Activated CD4-positive, alpha-beta T cell treated with anti-CD3 and anti-CD28 coated beads for 36 hours (primary cell): ENCODE measurements at regions of chr5 and their contacts with region 1.

Region 1: DNA sequence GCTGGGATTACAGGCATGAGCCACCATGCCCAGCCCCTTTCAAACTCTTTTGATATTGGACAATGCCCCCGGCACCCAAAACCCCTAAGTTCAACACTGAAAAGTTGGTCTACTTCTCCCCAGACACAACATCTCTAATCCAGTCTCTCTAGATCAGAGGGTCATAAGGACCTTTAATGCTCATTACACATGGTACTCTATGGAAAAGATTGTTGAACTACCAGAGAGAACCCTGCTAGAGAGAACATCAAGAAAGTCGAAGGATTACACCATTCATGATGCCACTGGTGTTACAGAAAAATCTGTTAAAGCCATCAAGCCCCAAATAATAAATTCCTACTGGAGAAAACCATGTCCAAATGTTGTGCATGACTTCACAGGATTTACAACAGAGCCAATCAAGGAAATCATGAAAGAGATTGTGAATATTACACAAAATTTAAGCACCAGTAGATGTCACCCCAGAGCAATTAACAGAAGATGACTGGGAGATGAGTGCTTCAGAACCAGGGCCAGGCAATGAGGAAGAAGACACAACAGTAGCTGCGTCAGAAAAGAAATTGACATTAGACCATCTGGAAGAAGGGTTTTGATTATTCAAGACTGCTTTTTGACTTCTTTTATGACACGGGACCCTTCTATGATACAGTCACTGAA is 28.3 kb upstream of the NIPAL4 start:
- DNase-seq: peak; percentile 53
- ATAC-seq: peak; percentile 99
- H3K4me3 Mint-ChIP-seq: no peak overlapping the region
- H3K27ac Mint-ChIP-seq: no peak overlapping the region
- H3K4me1 Mint-ChIP-seq: peaks cover 5% of the 10 kb centered on the region
- H3K27me3 Mint-ChIP-seq: peaks cover 2% of the 10 kb centered on the region

Region 2: DNA sequence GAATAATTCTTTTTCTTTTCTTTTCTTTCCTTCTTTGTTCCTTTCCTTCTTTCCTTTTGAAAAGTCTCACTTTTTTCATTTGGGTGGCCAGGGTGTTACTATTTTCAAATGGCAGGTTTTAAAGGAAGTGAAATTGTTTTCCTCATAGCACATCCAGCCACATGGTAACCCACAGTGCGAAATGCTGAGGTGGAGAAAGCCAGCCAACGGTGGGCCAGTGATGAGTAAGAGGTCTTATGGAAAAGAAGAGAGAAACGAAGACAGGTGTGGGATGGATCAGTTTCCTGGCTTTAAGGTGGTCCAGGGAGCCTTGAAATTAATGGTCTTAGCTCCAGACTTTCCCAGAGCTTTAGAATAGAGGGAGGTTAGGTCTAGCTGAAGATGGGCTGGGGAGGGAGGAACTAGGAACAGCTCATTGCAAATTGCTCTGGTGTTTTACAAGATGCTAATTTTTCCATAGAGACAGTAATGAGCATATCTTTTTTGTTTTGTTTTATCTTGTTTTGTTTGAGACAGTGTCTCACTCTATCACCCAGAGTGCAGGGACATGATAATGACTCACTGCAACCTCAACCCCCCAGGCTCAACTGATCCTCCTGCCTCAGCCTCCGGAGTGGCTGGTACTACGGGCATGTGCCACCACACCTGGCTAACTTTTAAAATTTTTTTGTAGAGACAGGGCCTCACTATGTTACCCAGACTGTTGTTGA is 233.2 kb before region 1 on chr5:
- CTCF ChIA-PET with region 1: no interaction called
- POLR2A ChIA-PET with region 1: no interaction called
- intact Hi-C with region 1: no loop called
- DNase-seq: peak; percentile 75
- ATAC-seq: peak; percentile 78
- H3K4me3 Mint-ChIP-seq: peak overlapping the region; percentile 66
- H3K27ac Mint-ChIP-seq: peak overlapping the region; percentile 98
- H3K4me1 Mint-ChIP-seq: peaks cover 94% of the 10 kb centered on the region
- H3K27me3 Mint-ChIP-seq: no peaks in the 10 kb centered on the region

Region 3: GRCh38 chr5:157471709-157472108 is 40.0 kb after region 1 on chr5:
- CTCF ChIA-PET with region 1: interaction called, 66 read pairs
- POLR2A ChIA-PET with region 1: no interaction called
- intact Hi-C with region 1: loop called in 1 of 2 experiments (anchors 1 kb)
- DNase-seq: peak; percentile 49
- ATAC-seq: peak; percentile 58
- H3K4me3 Mint-ChIP-seq: no peak overlapping the region
- H3K27ac Mint-ChIP-seq: no peak overlapping the region
- H3K4me1 Mint-ChIP-seq: no peaks in the 10 kb centered on the region
- H3K27me3 Mint-ChIP-seq: no peaks in the 10 kb centered on the region

Region 4: DNA sequence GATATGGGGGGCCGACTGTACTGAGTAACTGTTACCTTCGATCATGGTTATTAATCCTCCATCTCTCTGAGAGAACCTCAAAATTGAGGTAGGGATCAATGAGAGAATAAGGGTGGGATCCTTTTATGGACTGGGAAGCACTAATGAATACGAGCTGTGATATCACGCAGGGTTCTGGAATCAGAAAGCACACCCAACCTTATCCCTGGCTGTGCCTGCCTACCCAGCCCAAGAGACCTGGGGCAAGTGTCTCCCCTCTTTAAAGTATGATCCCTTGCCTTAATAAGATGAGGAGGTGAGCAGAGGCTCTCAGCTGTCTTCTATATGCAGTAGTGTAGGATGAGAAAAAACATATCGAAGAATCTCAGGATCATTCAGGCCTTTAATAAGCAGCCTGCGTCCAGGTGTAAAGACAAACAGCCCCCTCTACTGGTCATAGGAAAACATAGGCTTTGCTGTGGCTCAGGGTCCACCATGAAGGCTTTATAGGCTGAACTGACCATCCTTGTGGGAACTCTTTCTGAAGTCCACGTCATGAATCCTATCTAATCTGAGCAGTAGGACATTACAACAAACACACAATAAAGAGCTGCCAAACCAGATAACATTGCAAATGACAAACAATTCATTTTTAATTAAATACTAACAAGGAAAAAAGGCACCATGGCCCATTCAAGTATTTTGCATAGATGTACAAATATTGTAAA is 45.2 kb after region 1 on chr5:
- CTCF ChIA-PET with region 1: interaction called, 66 read pairs
- POLR2A ChIA-PET with region 1: no interaction called
- intact Hi-C with region 1: loop called (anchors 1 kb)
- DNase-seq: peak; percentile 42
- ATAC-seq: peak; percentile 68
- H3K4me3 Mint-ChIP-seq: no peak overlapping the region
- H3K27ac Mint-ChIP-seq: no peak overlapping the region
- H3K4me1 Mint-ChIP-seq: peaks cover 9% of the 10 kb centered on the region
- H3K27me3 Mint-ChIP-seq: no peaks in the 10 kb centered on the region

Region 5: DNA sequence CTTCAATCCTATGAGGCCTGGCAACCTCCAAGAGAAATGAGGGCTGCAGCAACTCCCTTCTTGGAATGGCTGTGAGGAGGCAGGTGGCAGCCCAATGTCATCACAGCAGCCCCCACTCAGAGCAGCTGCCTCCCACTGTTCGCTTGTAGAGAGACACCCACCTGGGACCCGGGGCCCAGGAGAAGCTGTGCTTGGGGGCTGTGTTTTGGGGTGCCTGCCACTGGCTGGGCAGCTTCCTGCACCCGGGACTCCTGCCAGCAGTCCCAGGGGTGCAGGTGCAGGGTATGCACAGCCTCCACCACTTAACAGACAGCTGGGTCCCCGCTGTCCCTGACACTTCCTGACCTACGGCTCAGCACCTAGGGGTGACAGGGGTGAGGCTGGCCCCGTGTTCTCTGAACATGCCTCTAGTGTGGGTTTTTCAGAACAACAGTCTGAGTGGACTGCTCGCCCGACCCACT is 54.6 kb after region 1 on chr5:
- CTCF ChIA-PET with region 1: interaction called, 10 read pairs
- POLR2A ChIA-PET with region 1: no interaction called
- intact Hi-C with region 1: no loop called
- DNase-seq: no peak
- ATAC-seq: peak; percentile 33
- H3K4me3 Mint-ChIP-seq: no peak overlapping the region
- H3K27ac Mint-ChIP-seq: no peak overlapping the region
- H3K4me1 Mint-ChIP-seq: peaks cover 11% of the 10 kb centered on the region
- H3K27me3 Mint-ChIP-seq: no peaks in the 10 kb centered on the region